ENCODE measurements at regions of chr7 and their contacts with region 1.

Region 1: DNA sequence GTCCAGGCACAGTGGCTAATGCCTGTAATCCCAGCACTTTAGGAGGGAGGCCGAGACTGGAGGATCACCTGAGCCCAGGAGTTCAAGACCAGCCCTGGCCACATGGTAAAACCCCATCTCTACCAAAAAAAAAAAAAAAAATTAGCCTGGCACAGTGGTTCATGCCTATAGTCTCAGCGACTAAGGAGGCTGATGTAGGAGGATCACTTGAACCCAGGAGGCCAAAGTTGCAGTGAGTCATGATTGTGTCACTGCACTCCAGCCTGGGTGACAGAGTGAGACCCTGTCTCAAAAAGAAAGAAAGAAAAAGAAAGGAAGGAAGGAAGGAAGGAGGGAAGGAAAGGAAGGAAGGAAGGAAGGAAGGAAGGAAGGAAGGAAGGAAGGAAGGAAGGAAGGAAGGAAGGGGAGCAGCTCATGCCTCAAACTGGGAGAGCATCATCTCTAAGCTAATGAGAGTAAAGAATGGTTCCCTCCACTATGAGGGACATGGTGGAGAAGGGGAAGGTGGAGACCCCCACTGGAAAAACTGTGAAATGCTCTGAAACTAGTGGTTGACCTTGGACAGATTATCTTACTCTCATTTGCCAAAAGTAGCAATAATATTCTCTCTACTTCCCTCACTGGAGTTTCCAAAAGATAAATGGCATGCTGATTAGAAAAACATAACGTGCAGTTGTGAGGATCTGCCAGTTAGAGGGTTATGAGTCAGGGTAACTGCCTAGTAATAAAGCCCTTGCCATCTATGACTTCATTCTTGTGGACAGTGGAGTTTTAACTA is 16.8 kb downstream of the GIMAP5 start:
- DNase-seq: peak; percentile 64
- H3K4me3 Mint-ChIP-seq: no peak overlapping the region
- H3K27ac Mint-ChIP-seq: peak overlapping the region; percentile 98
- H3K4me1 Mint-ChIP-seq: peaks cover 71% of the 10 kb centered on the region
- H3K27me3 Mint-ChIP-seq: no peaks in the 10 kb centered on the region

Region 2: DNA sequence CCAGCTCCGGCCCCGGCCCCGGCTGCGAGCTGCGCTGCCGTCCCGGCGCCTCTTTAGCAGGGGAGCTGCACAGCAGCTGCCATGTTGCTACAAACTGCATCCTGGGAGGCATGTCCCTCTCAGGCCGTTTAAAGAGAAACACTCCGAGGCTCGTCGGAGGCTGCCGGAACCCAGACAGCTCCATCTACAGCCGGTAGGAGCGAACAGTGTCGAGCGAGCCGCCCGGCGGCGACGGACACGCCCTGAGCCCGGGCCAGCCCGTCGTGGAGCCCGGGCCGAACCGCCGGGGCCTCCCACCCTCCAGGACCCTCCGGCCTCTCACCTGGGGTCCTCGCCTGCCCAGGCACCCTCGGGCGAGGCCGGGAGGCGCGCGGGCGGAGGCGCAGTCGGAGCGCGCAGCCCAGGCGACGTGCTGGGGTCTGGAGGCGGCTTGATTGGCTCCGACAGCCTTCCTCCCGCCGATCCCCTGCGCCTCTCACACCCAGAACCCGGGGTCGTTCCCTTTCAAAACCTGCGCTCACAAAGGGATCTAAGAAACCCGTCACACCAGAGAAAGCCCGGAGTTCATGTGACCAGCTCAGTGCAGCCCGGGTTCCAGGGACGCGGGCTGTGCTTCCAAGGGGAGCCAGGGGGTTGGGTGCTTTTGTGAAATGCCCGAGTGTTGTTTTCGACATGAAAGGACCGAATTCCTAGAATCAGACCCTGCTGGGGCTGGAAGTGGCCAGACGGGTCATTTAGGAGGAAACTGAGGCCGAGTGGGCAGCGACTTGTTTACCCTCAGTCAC is 1293.3 kb before region 1 on chr7 and contains the start of gene ZNF777:
- CTCF ChIA-PET with region 1: no interaction called
- intact Hi-C with region 1: no loop called
- DNase-seq: peak; percentile 85
- H3K4me3 Mint-ChIP-seq: peak within 1 kb of the TSS; percentile 80
- H3K27ac Mint-ChIP-seq: peak within 1 kb of the TSS; percentile 59
- H3K4me1 Mint-ChIP-seq: peaks cover 22% of the 10 kb centered on the region
- H3K27me3 Mint-ChIP-seq: peaks cover 3% of the 10 kb centered on the region
- total RNA-seq, gene ZNF777: 8.7 to 9.7 TPM

Region 3: GRCh38 chr7:150322833-150323681 is 431.0 kb before region 1 on chr7 and contains the starts of genes ACTR3C and LRRC61:
- CTCF ChIA-PET with region 1: no interaction called
- intact Hi-C with region 1: loop called (anchors 1 kb)
- DNase-seq: peak; percentile 71
- H3K4me3 Mint-ChIP-seq: peak within 1 kb of the TSS; percentile 95
- H3K27ac Mint-ChIP-seq: peak within 1 kb of the TSS; percentile 99
- H3K4me1 Mint-ChIP-seq: peaks cover 46% of the 10 kb centered on the region
- H3K27me3 Mint-ChIP-seq: no peaks in the 10 kb centered on the region
- total RNA-seq, gene ACTR3C: 3.1 to 3.4 TPM
- total RNA-seq, gene LRRC61: 10.3 to 13.3 TPM

Region 4: DNA sequence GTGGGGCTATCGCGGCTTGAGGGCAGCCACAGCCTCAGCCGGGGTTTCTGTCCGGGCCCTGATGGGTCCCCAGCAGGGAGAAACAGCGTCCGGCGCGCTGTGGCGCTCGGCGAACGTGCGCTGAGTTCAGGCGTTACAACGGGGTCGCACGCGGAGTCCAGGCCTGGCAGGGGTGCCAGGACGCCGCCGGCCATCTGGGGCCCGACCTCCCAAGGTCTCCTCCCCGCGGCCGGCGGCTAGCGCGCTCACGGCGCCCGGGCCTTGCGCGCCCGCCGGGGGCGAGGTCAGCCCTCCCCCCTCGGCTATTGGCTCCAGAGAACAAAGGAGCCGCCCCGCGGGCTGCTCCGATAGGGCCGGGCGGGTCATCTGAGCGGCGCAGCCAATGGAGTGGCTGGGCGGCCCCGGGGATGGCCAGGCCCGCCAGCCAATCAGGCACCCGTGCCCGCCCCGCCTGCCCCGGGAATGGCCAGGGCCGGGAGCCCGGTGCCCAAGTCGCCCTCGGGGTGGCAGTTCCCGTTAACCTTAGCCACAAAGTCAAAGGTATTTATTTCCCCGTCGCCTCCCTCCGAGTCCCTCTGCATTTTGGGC is 375.1 kb before region 1 on chr7 and contains the start of gene ZNF775:
- CTCF ChIA-PET with region 1: no interaction called
- intact Hi-C with region 1: loop called (anchors 2 kb)
- DNase-seq: peak; percentile 94
- H3K4me3 Mint-ChIP-seq: peak within 1 kb of the TSS; percentile 87
- H3K27ac Mint-ChIP-seq: peak within 1 kb of the TSS; percentile 77
- H3K4me1 Mint-ChIP-seq: peaks cover 47% of the 10 kb centered on the region
- H3K27me3 Mint-ChIP-seq: no peaks in the 10 kb centered on the region
- total RNA-seq, gene ZNF775: 4.5 to 5.2 TPM

Region 5: DNA sequence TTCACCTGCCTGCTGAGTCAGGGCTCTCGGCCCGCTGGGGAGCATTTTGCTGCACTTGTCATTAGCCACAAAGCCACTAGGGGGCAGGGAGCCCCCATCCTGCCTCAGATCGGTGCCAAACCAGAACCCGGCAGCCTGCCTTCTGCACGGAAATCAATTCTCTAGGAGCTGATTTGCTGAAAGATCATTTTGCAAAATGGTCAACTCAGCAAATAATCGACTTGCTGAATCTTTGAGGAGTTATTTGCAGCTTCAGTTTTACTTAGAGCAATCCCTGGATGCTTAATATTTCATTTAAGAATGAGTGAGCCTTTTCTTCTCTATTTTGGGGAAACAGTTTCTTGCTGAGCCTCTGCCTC is 305.2 kb before region 1 on chr7:
- CTCF ChIA-PET with region 1: interaction called, 43 read pairs
- intact Hi-C with region 1: loop called (anchors 1 kb)
- DNase-seq: peak; percentile 95
- H3K4me3 Mint-ChIP-seq: peak overlapping the region; percentile 98
- H3K27ac Mint-ChIP-seq: peak overlapping the region; percentile 99
- H3K4me1 Mint-ChIP-seq: peaks cover 42% of the 10 kb centered on the region
- H3K27me3 Mint-ChIP-seq: no peaks in the 10 kb centered on the region

Region 6: GRCh38 chr7:150567169-150567568 is 186.8 kb before region 1 on chr7 and contains the start of gene GIMAP4:
- CTCF ChIA-PET with region 1: interaction called, 4 read pairs
- intact Hi-C with region 1: loop called (anchors 1 kb)
- DNase-seq: peak; percentile 64
- H3K4me3 Mint-ChIP-seq: peak within 1 kb of the TSS; percentile 85
- H3K27ac Mint-ChIP-seq: peak within 1 kb of the TSS; percentile 96
- H3K4me1 Mint-ChIP-seq: peaks cover 66% of the 10 kb centered on the region
- H3K27me3 Mint-ChIP-seq: no peaks in the 10 kb centered on the region
- total RNA-seq, gene GIMAP4: 180 to 193 TPM

Region 7: DNA sequence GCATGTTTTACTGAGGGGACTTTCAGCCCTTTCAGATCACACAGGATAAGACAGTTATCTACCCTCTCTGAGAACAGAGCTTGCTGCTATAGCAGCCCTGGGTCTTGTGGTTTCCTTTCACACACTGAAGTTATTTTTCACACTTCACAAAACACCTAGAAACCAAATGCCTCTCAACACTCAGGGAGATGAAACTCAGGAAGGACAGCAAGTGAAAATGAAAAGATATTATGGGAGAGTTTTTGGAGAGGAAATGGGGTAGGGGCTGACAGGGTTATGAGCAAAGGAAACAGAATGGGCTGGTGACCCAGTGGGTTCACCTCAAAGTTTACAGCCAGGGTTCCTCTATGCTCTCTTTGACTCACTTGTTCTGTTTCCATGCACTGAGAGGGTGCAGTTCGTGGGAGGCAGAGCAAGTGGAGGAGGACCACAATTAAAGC is 85.5 kb before region 1 on chr7:
- CTCF ChIA-PET with region 1: interaction called, 11 read pairs
- intact Hi-C with region 1: loop called (anchors 1 kb)
- DNase-seq: peak; percentile 71
- H3K4me3 Mint-ChIP-seq: peak overlapping the region; percentile 19
- H3K27ac Mint-ChIP-seq: peak overlapping the region; percentile 95
- H3K4me1 Mint-ChIP-seq: peaks cover 88% of the 10 kb centered on the region
- H3K27me3 Mint-ChIP-seq: no peaks in the 10 kb centered on the region

Region 8: DNA sequence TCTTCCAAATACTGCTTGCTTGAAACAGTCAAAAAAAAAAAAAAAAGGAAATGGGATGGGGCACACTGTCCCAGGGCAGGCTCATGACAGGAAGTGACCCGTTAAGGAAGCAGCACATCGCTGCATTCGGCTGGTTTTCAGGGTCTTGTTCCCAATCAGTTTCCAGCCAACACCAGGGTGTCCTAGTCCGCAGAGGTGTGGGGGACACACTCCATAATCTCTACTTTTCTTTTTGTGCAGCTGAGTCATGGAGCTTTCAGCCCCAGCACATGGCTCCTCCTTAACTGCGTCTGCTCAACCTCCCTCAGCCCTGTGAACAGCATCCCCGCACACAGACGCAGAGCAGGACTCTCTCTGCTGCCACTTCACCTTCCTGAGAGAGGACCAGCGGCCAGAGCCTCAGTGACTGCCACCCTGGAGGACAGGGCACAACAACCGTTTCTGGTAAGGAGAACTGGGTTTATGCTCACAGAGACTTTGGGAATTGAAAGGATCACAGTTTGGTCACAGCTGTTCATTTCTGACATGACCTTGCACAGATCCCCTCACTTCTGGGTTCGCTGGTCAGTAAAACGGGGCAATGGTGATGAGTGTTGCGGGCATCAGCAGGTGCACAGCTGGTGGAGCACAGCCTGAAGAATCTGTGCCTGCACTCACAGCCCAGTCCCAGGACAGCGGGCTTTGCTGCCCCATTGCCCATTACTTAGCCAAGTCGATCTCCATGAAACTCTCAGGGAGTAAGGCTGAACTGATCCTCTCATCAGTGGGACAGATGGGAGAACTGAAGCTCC is 16.6 kb before region 1 on chr7 and contains the start of gene GIMAP5:
- CTCF ChIA-PET with region 1: interaction called, 18 read pairs
- intact Hi-C with region 1: loop called (anchors 1 kb)
- DNase-seq: peak; percentile 66
- H3K4me3 Mint-ChIP-seq: peak within 1 kb of the TSS; percentile 88
- H3K27ac Mint-ChIP-seq: peak within 1 kb of the TSS; percentile 95
- H3K4me1 Mint-ChIP-seq: peaks cover 72% of the 10 kb centered on the region
- H3K27me3 Mint-ChIP-seq: no peaks in the 10 kb centered on the region
- total RNA-seq, gene GIMAP5: 32.1 to 32.3 TPM

Measured in activated naive CD4-positive, alpha-beta T cell treated with anti-CD3 and anti-CD28 coated beads for 36 hours (primary cell).